ENCODE measurements at regions of chr15 and their contacts with region 1.

Region 1: GRCh38 chr15:25501828-25502446 is 63.1 kb upstream of the UBE3A start:
- DNase-seq: no peak
- H3K4me3 ChIP-seq: no peak overlapping the region
- CTCF ChIP-seq: peak; percentile 25

Region 2: GRCh38 chr15:24943361-24943760 is 558.6 kb before region 1 on chr15:
- CTCF ChIA-PET with region 1: no interaction called
- POLR2A ChIA-PET with region 1: no interaction called
- DNase-seq: no peak
- H3K4me3 ChIP-seq: no peak overlapping the region
- CTCF ChIP-seq: no peak

Region 3: DNA sequence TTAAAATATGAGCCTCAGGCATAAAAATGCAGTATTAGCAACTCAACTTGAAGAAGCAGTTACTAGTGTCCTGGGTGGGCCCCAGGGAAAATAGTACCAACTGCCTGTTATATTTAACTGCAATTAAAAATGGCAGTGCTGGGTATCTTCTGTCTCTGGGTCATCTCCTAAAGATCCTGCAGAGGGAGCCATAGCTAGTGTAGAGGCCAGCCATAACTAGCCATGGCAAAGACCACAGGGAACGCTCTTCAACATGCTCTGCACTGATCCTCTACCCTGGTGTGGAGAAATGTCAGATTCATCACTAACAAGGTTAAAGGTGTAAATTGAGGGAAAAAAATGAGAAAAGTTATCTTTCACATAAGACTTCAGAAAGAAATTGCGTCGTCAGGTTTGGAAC is 365.8 kb before region 1 on chr15:
- CTCF ChIA-PET with region 1: interaction called, 19 read pairs
- POLR2A ChIA-PET with region 1: no interaction called
- DNase-seq: no peak
- H3K4me3 ChIP-seq: no peak overlapping the region
- CTCF ChIP-seq: peak; percentile 17